WTC11 (cell line): ENCODE measurements at regions of chr3 and their contacts with region 1.

Region 1: DNA sequence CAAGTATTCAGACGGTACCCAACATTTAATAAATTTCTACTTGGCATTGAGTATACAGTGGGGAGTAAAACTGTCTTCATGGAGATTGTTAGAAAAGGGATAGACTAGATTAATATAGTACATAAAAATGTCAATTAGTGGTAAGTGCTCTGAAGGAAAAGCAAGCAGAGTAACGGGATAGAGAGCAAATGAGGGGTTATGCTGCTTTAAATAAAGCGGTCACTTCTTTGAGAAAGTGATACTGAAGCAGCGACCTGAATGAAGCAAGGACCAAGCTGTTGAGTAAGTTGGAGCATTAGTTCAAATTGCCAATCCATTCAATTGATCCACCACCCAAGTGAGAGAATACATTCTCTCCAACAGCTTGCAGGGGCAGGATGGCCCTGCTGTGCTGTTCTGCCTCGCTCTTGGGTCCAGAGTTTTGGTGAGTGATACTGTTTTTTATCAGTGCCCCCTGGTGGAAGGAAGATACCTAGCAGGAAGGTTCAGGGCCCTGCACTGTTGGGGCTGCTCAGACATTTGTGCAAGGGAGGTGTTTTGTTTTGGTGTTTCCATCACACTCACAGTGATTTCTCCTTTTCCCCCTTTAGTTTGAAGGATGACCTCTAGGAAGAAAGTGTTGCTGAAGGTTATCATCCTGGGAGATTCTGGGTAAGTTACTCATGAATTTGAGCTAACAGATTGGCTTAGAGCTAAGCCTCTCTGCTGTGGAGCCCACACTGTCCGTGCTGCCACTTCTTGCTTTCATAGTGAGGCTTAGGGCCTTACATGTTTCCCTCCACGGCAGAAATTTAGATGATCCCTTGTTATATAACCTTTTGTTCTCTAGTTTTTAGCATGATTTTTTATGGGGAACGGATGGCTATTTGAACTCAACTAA is 69.0 kb downstream of the RAB7A start:
- DNase-seq: peak; percentile 69
- ATAC-seq: peak; percentile 99
- H3K4me3 Mint-ChIP-seq: no peak overlapping the region
- H3K27ac Mint-ChIP-seq: peak overlapping the region; percentile 47
- H3K4me1 Mint-ChIP-seq: peaks cover 20% of the 10 kb centered on the region
- H3K27me3 Mint-ChIP-seq: no peaks in the 10 kb centered on the region
- CTCF ChIP-seq: peak; percentile 80

Region 2: GRCh38 chr3:128617557-128618397 is 177.2 kb before region 1 on chr3:
- CTCF ChIA-PET with region 1: interaction called, 17 read pairs
- POLR2A ChIA-PET with region 1: no interaction called
- DNase-seq: peak; percentile 98
- ATAC-seq: peak; percentile 91
- H3K4me3 Mint-ChIP-seq: peak overlapping the region; percentile 91
- H3K27ac Mint-ChIP-seq: peak overlapping the region; percentile 89
- H3K4me1 Mint-ChIP-seq: peaks cover 14% of the 10 kb centered on the region
- H3K27me3 Mint-ChIP-seq: no peaks in the 10 kb centered on the region
- CTCF ChIP-seq: peak; percentile 75; the same call in 1 of the 2 replicates

Region 3: DNA sequence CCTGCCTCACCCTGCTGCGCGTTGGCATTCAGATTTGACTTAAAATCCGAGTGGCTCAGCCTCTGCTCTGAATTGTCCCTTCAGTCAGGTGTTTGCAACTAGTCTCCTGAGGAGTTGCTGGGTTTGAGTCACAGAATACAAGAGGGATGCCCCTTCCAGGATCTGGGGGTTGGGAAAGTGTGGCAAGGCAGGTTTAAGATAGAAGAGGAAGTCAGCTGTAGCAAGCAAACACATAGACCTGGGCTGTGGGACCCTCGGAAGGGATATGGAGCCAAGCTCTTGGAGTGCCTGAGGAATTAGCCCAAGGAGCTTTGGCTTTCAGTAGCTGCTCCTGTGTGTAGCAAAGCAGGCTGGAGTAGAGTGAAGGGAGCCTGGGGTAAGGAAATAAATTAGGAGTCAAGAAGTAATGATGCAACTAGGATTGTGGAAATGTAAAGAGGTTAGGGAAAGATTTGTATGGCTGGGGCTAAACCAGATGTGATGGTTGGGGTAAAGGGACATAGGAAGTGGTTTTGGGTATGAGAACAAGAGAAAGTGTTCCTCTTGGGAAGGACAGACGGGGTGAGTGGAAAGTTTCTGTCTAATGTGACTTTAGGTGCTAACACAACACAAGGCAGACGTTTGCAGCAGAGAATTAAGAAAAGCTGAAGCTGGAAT is 27.8 kb before region 1 on chr3:
- CTCF ChIA-PET with region 1: interaction called, 11 read pairs
- POLR2A ChIA-PET with region 1: interaction called, 5 read pairs
- DNase-seq: no peak
- ATAC-seq: peak; percentile 39
- H3K4me3 Mint-ChIP-seq: no peak overlapping the region
- H3K27ac Mint-ChIP-seq: peak overlapping the region; percentile 78
- H3K4me1 Mint-ChIP-seq: peaks cover 47% of the 10 kb centered on the region
- H3K27me3 Mint-ChIP-seq: no peaks in the 10 kb centered on the region
- CTCF ChIP-seq: no peak

Region 4: DNA sequence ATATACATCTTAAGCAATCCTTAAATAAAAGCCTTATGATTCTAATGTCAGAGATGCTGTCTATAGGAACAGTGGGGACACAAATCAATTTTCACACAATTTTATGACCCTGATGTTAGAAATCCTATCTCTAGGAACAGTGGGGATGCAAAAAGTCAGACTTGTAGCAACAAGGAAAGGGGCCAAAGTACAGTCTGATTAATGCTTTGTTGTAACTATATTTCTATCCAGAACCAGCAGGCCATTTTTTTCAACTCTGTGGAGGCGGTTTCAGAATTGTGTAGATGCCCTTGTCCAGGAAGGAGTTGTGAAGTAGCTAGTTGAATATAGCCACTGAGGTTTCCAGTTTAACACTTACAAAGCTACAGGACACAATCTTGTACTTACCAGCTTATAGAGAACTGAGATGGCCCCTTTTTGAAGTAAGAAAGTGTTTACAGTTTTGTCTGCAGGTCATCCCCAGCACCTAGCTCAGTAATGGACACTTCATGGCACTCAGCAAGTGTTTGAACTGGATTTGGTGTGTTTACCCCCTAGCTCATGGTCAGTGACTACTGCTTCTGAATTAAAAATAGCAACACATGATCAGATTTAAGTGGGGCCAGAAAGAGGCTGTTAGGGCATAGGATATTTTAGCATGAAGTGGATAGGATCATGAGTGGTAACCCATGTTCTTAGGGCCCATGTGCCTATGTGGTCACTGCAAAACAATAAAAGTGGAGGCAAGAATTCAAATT is 14.7 kb before region 1 on chr3:
- CTCF ChIA-PET with region 1: interaction called, 11 read pairs
- POLR2A ChIA-PET with region 1: no interaction called
- DNase-seq: no peak
- ATAC-seq: no peak
- H3K4me3 Mint-ChIP-seq: no peak overlapping the region
- H3K27ac Mint-ChIP-seq: peak overlapping the region; percentile 8
- H3K4me1 Mint-ChIP-seq: peaks cover 43% of the 10 kb centered on the region
- H3K27me3 Mint-ChIP-seq: no peaks in the 10 kb centered on the region
- CTCF ChIP-seq: no peak

Region 5: DNA sequence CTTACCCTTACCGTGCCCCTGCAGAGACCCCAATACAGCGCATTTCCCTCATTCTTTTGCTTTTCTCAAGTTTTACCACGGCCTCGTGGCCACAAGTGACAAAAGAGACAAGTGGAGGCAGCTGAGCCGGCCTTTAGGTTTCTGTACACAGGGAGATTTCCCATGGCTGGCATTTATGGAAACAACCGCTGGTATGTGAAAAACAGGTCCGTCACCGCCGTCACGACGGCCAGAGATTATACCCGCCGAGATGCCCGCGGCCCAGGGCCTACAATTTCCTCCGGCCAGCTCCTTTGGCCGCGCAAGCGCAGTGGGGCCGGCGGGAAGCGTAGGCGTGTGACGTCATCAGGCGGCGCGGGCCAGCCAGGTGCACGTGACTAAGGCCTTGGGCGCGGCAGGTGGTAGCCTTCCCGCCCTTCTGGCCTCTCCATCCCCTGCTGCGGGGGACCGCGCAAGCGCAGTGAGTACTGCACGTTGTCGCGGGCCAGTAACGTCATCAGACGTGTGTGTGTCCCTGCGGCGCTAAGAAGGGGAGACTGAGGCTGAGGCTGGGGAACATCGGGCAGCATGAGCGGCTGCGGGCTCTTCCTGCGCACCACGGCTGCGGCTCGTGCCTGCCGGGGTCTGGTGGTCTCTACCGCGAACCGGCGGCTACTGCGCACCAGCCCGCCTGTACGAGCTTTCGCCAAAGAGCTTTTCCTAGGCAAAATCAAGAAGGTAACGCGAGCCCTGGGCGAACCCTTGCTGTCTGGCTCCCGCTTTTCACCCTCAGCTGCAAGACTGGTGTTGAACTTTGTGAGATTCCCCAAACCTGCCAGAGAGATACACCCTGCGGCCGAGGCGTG is 84.3 kb after region 1 on chr3 and contains the start of gene ACAD9:
- CTCF ChIA-PET with region 1: no interaction called
- POLR2A ChIA-PET with region 1: no interaction called
- DNase-seq: peak; percentile 97
- ATAC-seq: peak; percentile 74
- H3K4me3 Mint-ChIP-seq: peak within 1 kb of the TSS; percentile 83
- H3K27ac Mint-ChIP-seq: peak within 1 kb of the TSS; percentile 96
- H3K4me1 Mint-ChIP-seq: peaks cover 32% of the 10 kb centered on the region
- H3K27me3 Mint-ChIP-seq: peaks cover 6% of the 10 kb centered on the region
- CTCF ChIP-seq: no peak
- total RNA-seq, gene ACAD9: 31.2 to 35.2 TPM (median 31.8 TPM) in 3 replicates

Region 6: GRCh38 chr3:128910006-128910405 is 115.0 kb after region 1 on chr3:
- CTCF ChIA-PET with region 1: no interaction called
- POLR2A ChIA-PET with region 1: no interaction called
- DNase-seq: no peak
- ATAC-seq: no peak
- H3K4me3 Mint-ChIP-seq: no peak overlapping the region
- H3K27ac Mint-ChIP-seq: no peak overlapping the region
- H3K4me1 Mint-ChIP-seq: no peaks in the 10 kb centered on the region
- H3K27me3 Mint-ChIP-seq: no peaks in the 10 kb centered on the region
- CTCF ChIP-seq: no peak

Region 7: DNA sequence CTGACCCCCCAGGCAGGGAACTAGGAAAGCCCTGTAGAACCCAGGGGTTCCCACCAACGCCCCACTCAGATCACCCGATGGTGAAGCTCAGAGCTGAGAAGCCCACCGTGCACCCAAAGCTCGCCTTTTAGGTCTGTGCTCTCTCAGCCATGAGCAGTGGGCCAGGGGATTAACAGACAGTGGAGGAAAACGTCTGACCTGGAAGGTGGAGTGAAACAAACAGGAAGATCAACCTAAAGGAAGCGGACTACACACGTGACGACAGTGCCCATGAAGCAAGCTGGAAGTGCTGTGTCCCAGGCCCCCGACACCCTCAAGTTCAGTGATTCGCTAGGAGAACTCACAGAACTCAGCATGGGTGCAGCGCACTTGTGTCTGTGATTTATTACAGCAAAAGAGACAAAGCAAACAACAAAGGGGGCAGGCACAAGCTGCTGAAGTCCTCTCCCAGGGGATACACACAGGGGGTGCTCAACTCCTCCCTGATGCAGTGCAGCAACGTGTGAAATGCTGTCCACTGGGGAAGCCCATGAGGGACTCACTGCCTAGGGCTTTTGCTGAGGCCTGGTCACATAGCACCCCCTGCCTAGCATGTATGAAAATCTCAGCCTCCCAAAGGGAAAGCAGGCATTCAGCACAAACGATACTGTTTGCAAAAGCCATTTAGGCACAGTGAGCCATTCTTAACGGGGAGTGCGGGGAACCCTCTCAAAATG is 155.4 kb after region 1 on chr3:
- CTCF ChIA-PET with region 1: no interaction called
- POLR2A ChIA-PET with region 1: no interaction called
- DNase-seq: no peak
- ATAC-seq: peak; percentile 89
- H3K4me3 Mint-ChIP-seq: no peak overlapping the region
- H3K27ac Mint-ChIP-seq: no peak overlapping the region
- H3K4me1 Mint-ChIP-seq: no peaks in the 10 kb centered on the region
- H3K27me3 Mint-ChIP-seq: peaks cover 8% of the 10 kb centered on the region
- CTCF ChIP-seq: no peak

Region 8: GRCh38 chr3:129101370-129102138 is 306.5 kb after region 1 on chr3:
- CTCF ChIA-PET with region 1: no interaction called
- POLR2A ChIA-PET with region 1: no interaction called
- DNase-seq: no peak
- ATAC-seq: no peak
- H3K4me3 Mint-ChIP-seq: no peak overlapping the region
- H3K27ac Mint-ChIP-seq: peak overlapping the region; percentile 26
- H3K4me1 Mint-ChIP-seq: no peaks in the 10 kb centered on the region
- H3K27me3 Mint-ChIP-seq: no peaks in the 10 kb centered on the region
- CTCF ChIP-seq: no peak